Activated CD4-positive, alpha-beta memory T cell treated with anti-CD3 and anti-CD28 coated beads, Interleukin-2, amount 10 ng/mL, durations not matched to agents 7 days and 5 days (primary cell): ENCODE measurements at regions of chr13 and their contacts with region 1.

Region 1: GRCh38 chr13:40982772-40983171 is 36.3 kb downstream of the ELF1 start:
- DNase-seq: peak; percentile 65
- H3K4me3 Mint-ChIP-seq: peak overlapping the region; percentile 80
- H3K27ac Mint-ChIP-seq: peak overlapping the region; percentile 92
- H3K4me1 Mint-ChIP-seq: peaks cover 51% of the 10 kb centered on the region
- H3K27me3 Mint-ChIP-seq: no peaks in the 10 kb centered on the region

Region 2: DNA sequence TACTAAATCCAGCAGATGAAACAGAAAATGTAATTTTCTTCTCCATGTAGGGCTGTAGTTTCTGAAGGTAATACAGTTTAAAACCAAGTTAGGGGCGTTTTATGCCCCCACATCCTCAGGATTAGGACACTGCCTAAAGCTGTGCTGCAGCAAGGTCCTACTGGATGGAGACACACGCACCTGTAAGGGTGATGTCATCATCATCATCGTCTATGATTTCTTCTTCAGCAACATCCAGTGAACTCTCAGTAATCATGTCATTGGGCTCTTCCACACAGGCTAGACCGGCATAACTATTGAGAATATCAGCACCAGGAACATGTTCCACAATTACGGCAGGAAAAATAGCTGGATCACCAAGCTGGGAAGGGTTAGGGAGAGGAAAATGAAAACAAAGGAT is 24.1 kb before region 1 on chr13:
- CTCF ChIA-PET with region 1: no interaction called
- POLR2A ChIA-PET with region 1: no interaction called
- DNase-seq: no peak
- H3K4me3 Mint-ChIP-seq: no peak overlapping the region
- H3K27ac Mint-ChIP-seq: no peak overlapping the region
- H3K4me1 Mint-ChIP-seq: peaks cover 42% of the 10 kb centered on the region
- H3K27me3 Mint-ChIP-seq: no peaks in the 10 kb centered on the region

Region 3: GRCh38 chr13:40992678-40993518 is 10.1 kb after region 1 on chr13:
- CTCF ChIA-PET with region 1: interaction called, 8 read pairs
- POLR2A ChIA-PET with region 1: interaction called, 33 read pairs
- DNase-seq: no peak
- H3K4me3 Mint-ChIP-seq: no peak overlapping the region
- H3K27ac Mint-ChIP-seq: peak overlapping the region; percentile 61
- H3K4me1 Mint-ChIP-seq: peaks cover 79% of the 10 kb centered on the region
- H3K27me3 Mint-ChIP-seq: no peaks in the 10 kb centered on the region

Region 4: GRCh38 chr13:41004875-41005693 is 22.3 kb after region 1 on chr13:
- CTCF ChIA-PET with region 1: interaction called, 6 read pairs
- POLR2A ChIA-PET with region 1: interaction called, 445 read pairs
- DNase-seq: no peak
- H3K4me3 Mint-ChIP-seq: peak overlapping the region; percentile 55
- H3K27ac Mint-ChIP-seq: peak overlapping the region; percentile 95
- H3K4me1 Mint-ChIP-seq: peaks cover 71% of the 10 kb centered on the region
- H3K27me3 Mint-ChIP-seq: no peaks in the 10 kb centered on the region

Region 5: GRCh38 chr13:41013835-41014234 is 31.1 kb after region 1 on chr13:
- CTCF ChIA-PET with region 1: interaction called, 14 read pairs
- POLR2A ChIA-PET with region 1: interaction called, 445 read pairs
- DNase-seq: no peak
- H3K4me3 Mint-ChIP-seq: peak overlapping the region; percentile 80
- H3K27ac Mint-ChIP-seq: peak overlapping the region; percentile 62
- H3K4me1 Mint-ChIP-seq: peaks cover 51% of the 10 kb centered on the region
- H3K27me3 Mint-ChIP-seq: no peaks in the 10 kb centered on the region

Region 6: GRCh38 chr13:41054212-41054877 is 71.6 kb after region 1 on chr13:
- CTCF ChIA-PET with region 1: interaction called, 13 read pairs
- POLR2A ChIA-PET with region 1: interaction called, 20 read pairs
- DNase-seq: peak; percentile 38
- H3K4me3 Mint-ChIP-seq: no peak overlapping the region
- H3K27ac Mint-ChIP-seq: no peak overlapping the region
- H3K4me1 Mint-ChIP-seq: peaks cover 58% of the 10 kb centered on the region
- H3K27me3 Mint-ChIP-seq: no peaks in the 10 kb centered on the region

Region 7: GRCh38 chr13:41061075-41061913 is 78.5 kb after region 1 on chr13 and contains the start of gene WBP4:
- CTCF ChIA-PET with region 1: interaction called, 5 read pairs
- POLR2A ChIA-PET with region 1: interaction called, 20 read pairs
- DNase-seq: peak; percentile 89
- H3K4me3 Mint-ChIP-seq: peak within 1 kb of the TSS; percentile 95
- H3K27ac Mint-ChIP-seq: peak within 1 kb of the TSS; percentile 91
- H3K4me1 Mint-ChIP-seq: peaks cover 48% of the 10 kb centered on the region
- H3K27me3 Mint-ChIP-seq: no peaks in the 10 kb centered on the region
- total RNA-seq, gene WBP4: 9.0 to 9.3 TPM